Prostate gland (tissue), 2 donors: ENCODE measurements at regions of chrX and their contacts with region 1.

Region 1: DNA sequence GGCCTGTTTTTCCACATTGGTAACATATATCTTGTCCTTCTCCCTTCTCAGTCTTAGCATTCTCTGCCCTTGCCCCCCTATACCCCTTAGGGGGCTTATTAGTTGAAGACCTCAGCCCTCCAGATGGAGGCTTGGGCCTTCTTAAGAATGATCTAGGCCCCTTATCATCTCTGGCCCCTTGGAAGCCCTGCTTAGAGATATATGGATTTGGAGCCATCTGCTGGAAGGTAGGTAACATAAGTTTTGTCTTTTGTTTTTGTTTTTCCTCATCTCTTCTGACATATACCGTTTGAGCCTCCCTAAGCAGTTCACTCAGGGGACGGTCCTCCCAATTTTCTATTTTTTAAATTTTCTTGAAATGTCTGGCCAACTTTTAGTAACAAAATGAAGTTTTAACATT is 48.3 kb upstream of the NAP1L2 start:
- DNase-seq: no peak
- H3K4me3 ChIP-seq: no peak overlapping the region
- H3K27ac ChIP-seq: no peak overlapping the region
- H3K4me1 ChIP-seq: no peaks in the 10 kb centered on the region
- H3K27me3 ChIP-seq: no peaks in the 10 kb centered on the region
- CTCF ChIP-seq: peak in 1 of 4 experiments; percentile 22
- POLR2A ChIP-seq: no peak

Region 2: DNA sequence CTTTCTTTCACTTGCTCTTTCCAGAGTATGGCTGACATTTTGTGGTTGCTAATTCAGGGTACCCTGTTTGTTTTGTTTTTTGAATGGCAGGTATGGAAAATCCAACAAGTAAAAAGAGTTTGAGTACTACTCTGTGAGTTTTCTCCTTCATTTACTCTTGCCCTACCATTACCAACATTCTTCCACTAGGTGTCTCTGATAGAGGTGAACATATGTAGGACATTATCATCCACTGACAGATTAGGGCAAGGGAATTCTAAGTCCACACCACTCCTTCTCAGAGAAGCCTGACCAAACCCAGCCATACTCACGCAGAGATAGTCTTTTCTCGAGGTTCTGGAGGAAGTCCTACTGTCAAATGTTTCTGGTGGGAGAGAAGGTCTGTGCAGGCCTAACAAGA is 653.7 kb before region 1 on chrX:
- intact Hi-C with region 1: loop called (anchors 10 kb)
- DNase-seq: no peak
- H3K4me3 ChIP-seq: no peak overlapping the region
- H3K27ac ChIP-seq: no peak overlapping the region
- H3K4me1 ChIP-seq: no peaks in the 10 kb centered on the region
- H3K27me3 ChIP-seq: no peaks in the 10 kb centered on the region
- CTCF ChIP-seq: peak in 1 of 4 experiments; percentile 23
- POLR2A ChIP-seq: no peak

Region 3: DNA sequence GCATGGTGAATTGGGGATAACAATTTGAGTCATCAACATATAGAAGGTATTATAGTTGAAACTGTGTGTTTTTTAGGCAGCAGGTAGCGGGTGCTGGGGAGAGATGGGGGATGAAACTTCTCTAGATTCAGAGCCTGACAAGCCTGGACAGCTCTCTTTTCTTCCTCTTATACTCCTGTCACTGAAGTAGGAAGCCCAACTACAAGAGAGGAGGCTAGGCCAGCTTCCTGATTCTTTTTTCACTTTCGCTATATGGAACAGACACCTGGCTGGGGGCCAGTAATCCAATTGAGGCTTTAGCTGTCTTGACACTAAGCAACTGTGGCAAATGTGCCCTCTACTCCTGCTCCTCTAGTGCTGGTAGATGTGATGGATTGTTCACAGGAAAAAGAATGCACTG is 618.0 kb before region 1 on chrX:
- intact Hi-C with region 1: no loop called
- DNase-seq: no peak
- H3K4me3 ChIP-seq: no peak overlapping the region
- H3K27ac ChIP-seq: no peak overlapping the region
- H3K4me1 ChIP-seq: no peaks in the 10 kb centered on the region
- H3K27me3 ChIP-seq: no peaks in the 10 kb centered on the region
- CTCF ChIP-seq: no peak
- POLR2A ChIP-seq: no peak

Region 4: DNA sequence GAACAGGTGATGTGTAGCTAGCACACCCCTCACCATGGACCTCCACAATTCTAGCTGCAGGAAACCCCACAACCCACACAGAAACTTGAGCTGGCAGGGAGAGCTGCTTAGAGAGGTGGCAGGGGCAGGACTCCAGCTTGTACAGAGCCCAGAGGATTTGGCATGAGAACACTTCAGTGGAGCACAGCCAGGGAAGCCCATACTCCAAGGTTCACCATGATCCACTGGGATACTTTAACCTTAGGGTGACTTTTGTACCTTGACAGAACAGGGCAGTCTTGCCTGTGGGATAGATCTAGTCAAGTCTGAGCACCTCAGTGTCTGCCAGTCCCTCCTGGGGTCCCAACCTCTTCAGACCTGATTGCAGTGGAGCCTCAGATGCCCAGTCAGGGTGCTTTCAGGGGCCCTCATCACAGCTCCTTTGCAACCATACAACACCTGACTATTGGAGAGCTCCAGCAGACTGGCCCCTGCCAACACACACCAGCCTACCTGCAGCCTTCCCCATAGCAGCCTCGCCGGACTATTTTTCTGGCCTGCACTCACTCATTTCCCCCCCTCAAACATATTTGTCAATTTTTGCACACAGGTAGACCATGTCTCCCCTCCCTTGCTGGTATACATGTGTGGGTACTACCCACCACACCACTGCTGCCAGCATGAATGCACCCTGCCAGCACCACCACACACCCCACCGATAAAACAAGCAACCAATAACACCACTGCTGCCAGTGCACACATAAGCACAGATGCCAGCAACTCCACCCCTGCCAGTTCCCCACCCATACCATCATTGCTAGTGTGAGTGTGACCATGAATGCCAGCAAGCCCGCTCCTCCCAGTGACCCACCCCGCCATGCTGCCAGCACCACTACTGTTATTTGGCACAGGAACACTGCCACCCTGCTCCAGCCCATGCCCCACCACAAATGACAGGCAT is 127.9 kb after region 1 on chrX:
- intact Hi-C with region 1: no loop called
- DNase-seq: no peak
- H3K4me3 ChIP-seq: no peak overlapping the region
- H3K27ac ChIP-seq: no peak overlapping the region
- H3K4me1 ChIP-seq: no peaks in the 10 kb centered on the region
- H3K27me3 ChIP-seq: no peaks in the 10 kb centered on the region
- CTCF ChIP-seq: no peak
- POLR2A ChIP-seq: no peak

Region 5: GRCh38 chrX:73563738-73564068 is 300.7 kb after region 1 on chrX:
- intact Hi-C with region 1: no loop called
- DNase-seq: no peak
- H3K4me3 ChIP-seq: peak overlapping the region; percentile 48 to 50
- H3K27ac ChIP-seq: peak overlapping the region; percentile 79 to 85
- H3K4me1 ChIP-seq: no peaks in the 10 kb centered on the region
- H3K27me3 ChIP-seq: no peaks in the 10 kb centered on the region
- CTCF ChIP-seq: no peak
- POLR2A ChIP-seq: no peak